ENCODE measurements at regions of chr1 and their contacts with region 1.

Region 1: GRCh38 chr1:172443626-172444453 is at the start of gene PIGC:
- DNase-seq: peak; percentile 88 to 95 (median 92)
- H3K4me3 ChIP-seq: peak within 1 kb of the TSS; percentile 44 to 94 (median 80)
- H3K27ac ChIP-seq: peak within 1 kb of the TSS in 3 of 5 donors; percentile 59 to 85 (median 62)
- H3K4me1 ChIP-seq: peaks cover 0 to 14% of the 10 kb centered on the region in 2 donors
- H3K27me3 ChIP-seq: no peaks in the 10 kb centered on the region
- CTCF ChIP-seq: peak; percentile 52 to 88 (median 85)
- POLR2A ChIP-seq: peak in 1 of 2 donors; percentile 20
- total RNA-seq, gene PIGC: 19.7 to 33.6 (median 25.0) TPM

Region 2: GRCh38 chr1:172530000-172530399 is 86.2 kb after region 1 on chr1:
- intact Hi-C with region 1: loop called in 1 of 2 experiments (anchors 10 kb)
- DNase-seq: no peak
- H3K4me3 ChIP-seq: no peak overlapping the region
- H3K27ac ChIP-seq: no peak overlapping the region
- H3K4me1 ChIP-seq: peaks cover 7 to 20% of the 10 kb centered on the region in 2 donors
- H3K27me3 ChIP-seq: no peaks in the 10 kb centered on the region
- CTCF ChIP-seq: no peak
- POLR2A ChIP-seq: no peak

Measured in adrenal gland (tissue), 19 donors.